BJ (cell line): ENCODE measurements at regions of chr12 and their contacts with region 1.

Region 1: GRCh38 chr12:119695034-119695433 is 27.1 kb downstream of the PRKAB1 start:
- DNase-seq: no peak
- H3K4me3 ChIP-seq: no peak overlapping the region
- H3K27me3 ChIP-seq: no peaks in the 10 kb centered on the region
- CTCF ChIP-seq: peak; percentile 69

Region 2: DNA sequence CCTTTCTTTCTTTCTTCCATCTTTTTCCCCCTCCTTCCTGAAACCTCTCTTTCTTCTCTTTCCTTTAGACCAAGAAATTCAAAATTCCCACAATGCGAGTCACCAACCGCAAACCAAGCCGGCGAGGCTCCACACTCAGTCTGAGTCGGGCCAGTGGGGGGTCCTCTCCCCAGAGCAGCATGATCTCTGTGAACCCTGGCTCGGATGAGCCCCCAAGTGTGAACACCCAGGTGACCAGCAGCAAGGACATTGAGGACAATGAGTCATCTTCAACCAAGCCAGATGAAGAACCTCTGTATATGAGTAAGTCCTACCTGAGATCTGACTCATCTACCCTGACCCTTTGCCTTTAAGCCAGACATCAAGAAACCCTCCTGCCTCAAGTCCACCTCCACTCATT is 190.0 kb before region 1 on chr12:
- CTCF ChIA-PET with region 1: no interaction called
- POLR2A ChIA-PET with region 1: no interaction called
- DNase-seq: no peak
- H3K4me3 ChIP-seq: no peak overlapping the region
- H3K27me3 ChIP-seq: no peaks in the 10 kb centered on the region
- CTCF ChIP-seq: no peak

Region 3: DNA sequence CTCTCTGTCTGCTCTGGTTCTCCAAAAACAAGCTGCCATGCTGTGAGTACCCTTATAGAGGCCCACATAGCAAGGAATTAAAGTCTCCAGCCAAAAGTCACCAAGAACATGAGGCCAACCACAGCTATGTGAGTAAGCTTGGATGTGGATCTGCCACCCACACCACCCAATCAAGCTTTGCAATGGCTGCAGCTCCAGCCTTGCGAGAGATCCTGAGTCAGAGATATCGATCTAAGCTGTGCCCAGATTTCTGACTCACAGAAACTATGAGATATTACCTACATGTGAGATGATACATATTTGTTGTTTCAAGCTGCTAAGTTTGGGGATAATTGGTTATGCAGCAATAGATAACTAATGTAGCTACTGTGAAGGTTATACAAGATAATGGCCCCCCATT is 116.9 kb before region 1 on chr12:
- CTCF ChIA-PET with region 1: no interaction called
- POLR2A ChIA-PET with region 1: no interaction called
- DNase-seq: no peak
- H3K4me3 ChIP-seq: no peak overlapping the region
- H3K27me3 ChIP-seq: no peaks in the 10 kb centered on the region
- CTCF ChIP-seq: no peak

Region 4: DNA sequence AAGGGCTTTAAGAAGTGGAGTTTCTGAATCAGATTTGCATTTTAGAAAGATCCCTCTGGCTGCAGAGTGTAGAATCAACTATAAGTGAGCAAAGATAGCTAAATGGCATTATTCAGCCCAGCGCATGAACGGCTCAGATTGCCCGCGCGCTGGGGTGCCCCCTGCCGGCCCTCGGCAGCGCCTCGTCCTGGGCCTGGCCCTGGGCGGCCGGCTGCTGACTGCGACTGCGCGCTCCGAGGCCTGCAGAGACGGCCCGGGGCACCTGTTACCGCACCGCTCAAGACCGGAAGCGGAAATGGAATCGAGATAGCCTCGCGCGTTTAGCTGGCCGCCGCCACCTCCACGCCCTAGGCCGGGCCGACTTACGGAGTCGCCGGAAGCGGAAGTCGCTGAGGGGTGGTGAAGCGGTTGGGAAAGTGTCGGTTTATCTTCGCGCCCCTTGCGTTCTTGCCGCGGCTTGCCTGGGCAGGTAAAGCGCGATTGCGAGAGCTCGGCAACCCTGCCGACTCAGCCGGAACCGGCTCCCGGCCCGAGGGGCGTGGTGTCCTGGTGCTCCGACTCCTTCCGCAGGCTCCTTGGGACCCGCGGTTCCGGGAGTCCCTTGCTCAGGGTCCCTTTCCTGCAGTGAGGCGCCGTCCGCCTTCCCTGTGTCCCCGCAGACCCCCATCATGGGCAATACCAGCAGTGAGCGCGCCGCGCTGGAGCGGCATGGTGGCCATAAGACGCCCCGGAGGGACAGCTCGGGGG is 27.3 kb before region 1 on chr12 and contains the start of gene PRKAB1:
- CTCF ChIA-PET with region 1: interaction called, 10 read pairs
- POLR2A ChIA-PET with region 1: no interaction called
- DNase-seq: peak; percentile 83
- H3K4me3 ChIP-seq: peak within 1 kb of the TSS; percentile 85
- H3K27me3 ChIP-seq: peaks cover 1% of the 10 kb centered on the region; the same call in 1 of the 2 replicates
- CTCF ChIP-seq: peak; percentile 80
- polyA plus RNA-seq, gene PRKAB1: 34.6 and 45.7 TPM in 2 replicates

Region 5: DNA sequence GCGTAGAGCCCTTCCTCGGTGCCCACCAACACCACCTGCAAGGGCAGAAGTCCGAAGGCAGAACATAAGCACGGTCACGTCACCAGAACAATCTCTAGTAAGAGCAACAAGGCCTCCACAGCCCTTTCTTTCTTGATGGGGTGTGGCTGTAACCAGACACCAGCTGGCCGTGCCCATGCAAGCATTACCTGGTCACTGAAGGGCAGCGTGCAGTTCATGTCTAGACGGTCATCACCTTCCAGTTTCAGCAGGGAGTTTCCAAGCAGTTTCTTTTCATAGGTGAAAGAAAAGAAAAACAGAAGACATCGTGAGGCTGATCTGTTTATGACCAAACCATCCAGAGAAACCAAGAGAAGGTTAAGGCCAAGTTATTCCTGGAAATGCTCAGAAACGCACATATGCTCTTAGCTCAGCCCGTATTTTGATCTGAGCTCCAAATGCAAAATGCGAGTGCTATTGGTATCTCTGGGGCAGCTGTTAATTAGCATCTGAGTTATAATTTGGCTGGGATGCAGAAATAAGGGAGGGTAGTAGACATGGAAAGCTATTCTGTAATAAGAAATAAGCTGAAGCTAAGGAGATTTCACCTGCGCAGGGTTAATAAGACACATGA is 15.4 kb after region 1 on chr12:
- CTCF ChIA-PET with region 1: interaction called, 12 read pairs
- POLR2A ChIA-PET with region 1: no interaction called
- DNase-seq: no peak
- H3K4me3 ChIP-seq: no peak overlapping the region
- H3K27me3 ChIP-seq: no peaks in the 10 kb centered on the region
- CTCF ChIP-seq: no peak